ENCODE measurements at regions of chr1 and their contacts with region 1.

Region 1: GRCh38 chr1:32817159-32817814 is at the starts of genes S100PBP and YARS1:
- DNase-seq: peak; percentile 99 to 100 (median 99)
- H3K4me3 ChIP-seq: peak within 1 kb of the TSS; percentile 67 to 70
- H3K4me3 Mint-ChIP-seq: peak within 1 kb of the TSS; percentile 94 to 100 (median 96)
- H3K27ac ChIP-seq: peak within 1 kb of the TSS; percentile 89
- H3K27ac Mint-ChIP-seq: peak within 1 kb of the TSS; percentile 82 to 97 (median 95)
- H3K4me1 ChIP-seq: peaks cover 60% of the 10 kb centered on the region
- H3K4me1 Mint-ChIP-seq: peaks cover 36 to 71% (median 51%) of the 10 kb centered on the region in 4 donors
- H3K27me3 ChIP-seq: no peaks in the 10 kb centered on the region
- H3K27me3 Mint-ChIP-seq: no peaks in the 10 kb centered on the region
- total RNA-seq, gene S100PBP: 63.2 to 65.5 TPM
- total RNA-seq, gene YARS1: 110 to 114 TPM

Region 2: GRCh38 chr1:32801096-32801715 is 16.1 kb before region 1 on chr1:
- CTCF ChIA-PET with region 1: interaction called, 3 read pairs
- POLR2A ChIA-PET with region 1: interaction called, 20 read pairs
- intact Hi-C with region 1: loop called (anchors 1 kb)
- DNase-seq: peak; percentile 58 to 78 (median 62)
- H3K4me3 ChIP-seq: no peak overlapping the region
- H3K4me3 Mint-ChIP-seq: peak overlapping the region; percentile 25 to 88 (median 74)
- H3K27ac ChIP-seq: peak overlapping the region; percentile 55
- H3K27ac Mint-ChIP-seq: peak overlapping the region; percentile 77 to 97 (median 92)
- H3K4me1 ChIP-seq: peaks cover 58% of the 10 kb centered on the region
- H3K4me1 Mint-ChIP-seq: peaks cover 31 to 55% (median 45%) of the 10 kb centered on the region in 4 donors
- H3K27me3 ChIP-seq: no peaks in the 10 kb centered on the region
- H3K27me3 Mint-ChIP-seq: no peaks in the 10 kb centered on the region